Right cardiac atrium (tissue), 5 donors: ENCODE measurements at regions of chr2 and their contacts with region 1.

Region 1: GRCh38 chr2:72887754-72888437 is 688 bp downstream of the SPR start:
- DNase-seq: peak; percentile 92 to 96 (median 96)
- ATAC-seq: peak; percentile 70 to 82
- H3K4me3 ChIP-seq: peak overlapping the region; percentile 55
- H3K27ac ChIP-seq: peak overlapping the region; percentile 89
- H3K4me1 ChIP-seq: peaks cover 4% of the 10 kb centered on the region
- H3K27me3 ChIP-seq: no peaks in the 10 kb centered on the region

Region 2: GRCh38 chr2:72973566-72974435 is 85.9 kb after region 1 on chr2:
- intact Hi-C with region 1: loop called in 1 of 4 experiments (anchors 5 kb)
- DNase-seq: peak in 1 of 3 donors; percentile 65
- ATAC-seq: peak; percentile 50 to 79
- H3K4me3 ChIP-seq: no peak overlapping the region
- H3K27ac ChIP-seq: no peak overlapping the region
- H3K4me1 ChIP-seq: no peaks in the 10 kb centered on the region
- H3K27me3 ChIP-seq: no peaks in the 10 kb centered on the region

Region 3: GRCh38 chr2:72993147-72993932 is 105.4 kb after region 1 on chr2:
- intact Hi-C with region 1: loop called in 1 of 4 experiments (anchors 10 kb)
- DNase-seq: no peak
- ATAC-seq: peak in 1 of 2 donors; percentile 42
- H3K4me3 ChIP-seq: no peak overlapping the region
- H3K27ac ChIP-seq: no peak overlapping the region
- H3K4me1 ChIP-seq: no peaks in the 10 kb centered on the region
- H3K27me3 ChIP-seq: no peaks in the 10 kb centered on the region

Region 4: DNA sequence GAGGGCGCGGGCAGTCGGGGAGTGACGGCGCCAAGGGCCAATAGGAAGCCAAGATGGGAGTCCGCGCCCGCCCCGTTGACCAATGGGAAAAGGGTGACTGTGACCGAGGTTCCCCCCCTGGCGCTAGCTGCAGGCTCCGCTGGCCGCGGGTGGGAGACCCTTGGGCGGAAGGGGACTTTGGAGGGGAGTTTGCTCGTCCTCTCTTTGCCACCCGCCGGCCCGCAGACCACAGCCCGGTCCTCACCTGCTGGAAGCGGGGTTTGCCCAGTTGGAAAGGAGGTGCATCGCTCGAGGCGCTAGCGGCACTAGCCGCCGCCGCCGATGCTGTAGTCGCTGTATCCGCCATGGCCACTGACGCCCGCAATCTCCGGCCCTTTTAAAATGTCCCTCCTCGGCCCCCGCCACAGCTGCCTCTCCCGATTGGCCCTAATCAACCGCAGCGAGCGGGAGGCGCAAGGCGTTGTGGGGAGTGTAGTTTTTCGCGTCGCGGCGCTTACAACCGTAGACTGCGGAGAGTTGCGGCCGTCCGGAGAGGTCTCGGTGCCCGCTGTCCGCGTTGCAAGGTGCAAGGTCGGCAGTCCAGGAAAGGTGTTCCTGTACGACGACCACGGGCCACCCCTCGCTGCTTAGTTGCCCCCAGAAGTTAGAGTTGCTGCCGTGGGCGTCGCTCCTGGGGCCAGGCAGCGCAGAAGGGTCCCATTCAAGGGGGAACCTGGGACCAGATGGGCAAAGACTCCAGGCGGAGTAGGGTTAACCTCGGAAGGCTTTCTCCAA is 183.7 kb after region 1 on chr2 and contains the start of gene SFXN5:
- intact Hi-C with region 1: loop called in 1 of 4 experiments (anchors 5 kb)
- DNase-seq: peak; percentile 98 to 99 (median 99)
- ATAC-seq: peak; percentile 98
- H3K4me3 ChIP-seq: peak within 1 kb of the TSS; percentile 84
- H3K27ac ChIP-seq: peak within 1 kb of the TSS; percentile 82
- H3K4me1 ChIP-seq: peaks cover 9% of the 10 kb centered on the region
- H3K27me3 ChIP-seq: no peaks in the 10 kb centered on the region
- total RNA-seq, gene SFXN5: 10.1 to 12.1 (median 10.8) TPM

Region 5: DNA sequence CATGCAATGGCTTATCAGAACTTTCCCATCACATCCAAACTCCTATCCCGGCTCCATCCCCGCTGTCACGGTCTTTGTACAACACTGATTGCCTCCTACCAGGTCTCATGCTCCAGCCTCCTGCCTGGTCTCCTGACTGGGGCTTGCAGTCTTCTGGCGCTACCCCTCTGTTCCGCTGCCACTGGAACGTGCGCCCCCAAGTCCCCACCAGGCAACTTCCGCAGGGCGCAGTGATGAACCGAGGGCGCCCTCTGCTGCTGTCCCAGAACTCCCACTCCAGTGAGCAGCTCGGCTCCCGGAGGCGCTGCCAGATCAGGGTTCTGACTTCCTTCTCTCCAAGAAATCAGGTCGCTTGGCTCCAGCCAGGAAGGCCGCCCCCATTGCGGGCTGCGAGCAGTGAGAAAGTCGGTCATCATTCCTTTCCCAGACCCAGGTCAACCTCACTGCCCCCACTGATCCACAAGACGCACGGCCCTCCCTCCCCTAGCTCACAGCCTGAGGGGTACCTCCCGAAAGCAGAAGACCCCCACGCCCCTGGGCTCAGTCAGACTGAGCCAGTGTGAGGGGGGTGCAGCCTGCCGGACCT is 268.7 kb after region 1 on chr2:
- intact Hi-C with region 1: loop called (anchors 5 kb)
- DNase-seq: peak; percentile 74 to 87 (median 85)
- ATAC-seq: peak; percentile 82 to 93
- H3K4me3 ChIP-seq: no peak overlapping the region
- H3K27ac ChIP-seq: no peak overlapping the region
- H3K4me1 ChIP-seq: no peaks in the 10 kb centered on the region
- H3K27me3 ChIP-seq: no peaks in the 10 kb centered on the region

Region 6: DNA sequence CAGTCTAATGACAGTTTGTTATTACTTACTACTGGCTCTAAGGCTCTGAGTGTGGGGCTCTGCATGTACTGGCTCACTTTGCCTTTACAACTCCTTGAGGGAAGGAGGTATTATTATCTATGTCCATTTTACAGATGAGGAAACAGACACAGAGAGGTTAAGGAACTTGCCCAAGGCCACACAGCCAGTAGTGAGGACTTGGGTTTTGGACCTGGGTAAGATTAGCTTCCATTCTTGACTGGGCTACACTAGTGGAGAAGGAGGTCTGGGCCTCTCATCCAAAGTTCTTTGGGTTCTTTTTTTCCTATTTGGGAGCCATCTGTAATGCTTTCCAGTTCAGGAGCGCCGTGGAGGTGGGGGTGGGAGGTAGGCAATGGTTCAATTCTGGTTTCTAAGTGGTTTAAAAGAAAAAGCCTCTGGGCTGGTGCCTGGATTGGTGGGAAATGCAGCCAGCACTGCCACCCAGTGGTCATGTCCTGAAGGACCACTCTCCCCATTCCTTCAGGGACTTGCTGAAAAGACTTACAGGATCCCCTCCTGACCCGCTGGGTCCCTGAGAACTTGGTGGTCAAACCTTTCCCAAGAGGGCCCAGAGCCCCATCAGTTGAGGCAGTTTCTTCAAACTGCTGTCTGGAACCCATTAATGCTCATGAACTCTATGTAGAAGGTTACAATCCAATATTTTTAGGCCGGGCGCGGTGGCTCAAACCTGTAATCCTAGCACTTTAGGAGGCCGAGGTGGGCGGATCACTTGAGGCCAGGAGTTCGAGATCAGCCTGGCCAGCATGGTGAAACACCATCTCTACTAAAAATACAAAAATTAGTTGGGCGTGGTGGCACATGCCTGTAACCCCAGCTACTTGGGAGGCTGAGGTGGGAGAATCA is 275.8 kb after region 1 on chr2:
- intact Hi-C with region 1: loop called (anchors 5 kb)
- DNase-seq: peak; percentile 64 to 84 (median 71)
- ATAC-seq: peak; percentile 81 to 89
- H3K4me3 ChIP-seq: no peak overlapping the region
- H3K27ac ChIP-seq: no peak overlapping the region
- H3K4me1 ChIP-seq: no peaks in the 10 kb centered on the region
- H3K27me3 ChIP-seq: no peaks in the 10 kb centered on the region

Region 7: DNA sequence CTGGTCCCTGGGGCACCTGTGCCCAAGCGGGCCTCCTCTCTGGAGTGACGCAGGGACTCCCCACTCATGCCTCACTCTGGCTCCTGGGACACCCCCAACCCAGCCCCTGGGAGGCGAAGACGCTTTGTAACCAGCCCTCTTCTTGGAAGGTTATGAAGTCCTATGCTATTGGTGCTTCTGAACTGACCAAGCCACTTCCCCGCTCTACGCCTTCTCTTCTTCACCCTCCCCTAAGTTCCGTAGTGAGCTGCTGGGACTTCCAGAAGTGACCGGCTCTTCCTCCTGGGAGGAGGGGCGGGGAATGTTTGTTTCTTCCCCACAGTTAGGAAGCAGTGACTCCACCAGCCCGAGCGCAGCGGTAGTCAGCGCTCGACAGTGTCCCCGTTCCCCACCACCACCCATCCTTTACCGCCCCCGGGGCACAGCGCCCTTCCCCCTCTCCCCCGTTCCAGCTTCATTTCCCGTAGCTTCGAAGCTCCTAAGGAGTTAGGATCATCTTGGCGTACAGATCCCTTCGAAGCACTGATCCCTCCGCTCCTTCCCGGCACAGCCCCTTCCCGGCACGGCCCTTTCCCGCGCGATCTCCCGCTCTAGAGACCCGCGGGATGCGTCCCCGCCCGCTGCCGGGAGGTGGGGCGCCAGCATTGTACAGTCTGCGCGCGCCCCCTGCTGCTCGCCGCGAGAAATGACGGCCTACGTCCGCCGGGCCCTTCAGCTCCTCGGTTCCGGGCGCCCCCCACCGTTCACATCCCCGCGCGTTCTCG is 289.2 kb after region 1 on chr2:
- intact Hi-C with region 1: loop called in 2 of 4 experiments (anchors 5 kb)
- DNase-seq: peak; percentile 93 to 98 (median 96)
- ATAC-seq: peak; percentile 91 to 94
- H3K4me3 ChIP-seq: peak overlapping the region; percentile 65
- H3K27ac ChIP-seq: peak overlapping the region; percentile 13
- H3K4me1 ChIP-seq: peaks cover 2% of the 10 kb centered on the region
- H3K27me3 ChIP-seq: no peaks in the 10 kb centered on the region